Colonic mucosa (tissue), 4 donors: ENCODE measurements at regions of chr19 and their contacts with region 1.

Region 1: GRCh38 chr19:14347999-14348889 is 33.0 kb upstream of the ADGRE5 start:
- DNase-seq: peak; percentile 73
- H3K4me3 ChIP-seq: peak overlapping the region; percentile 3
- H3K27ac ChIP-seq: no peak overlapping the region
- H3K4me1 ChIP-seq: no peaks in the 10 kb centered on the region
- H3K27me3 ChIP-seq: no peaks in the 10 kb centered on the region
- CTCF ChIP-seq: peak; percentile 98

Region 2: GRCh38 chr19:14183741-14184350 is 164.4 kb before region 1 on chr19:
- intact Hi-C with region 1: no loop called
- DNase-seq: no peak
- H3K4me3 ChIP-seq: no peak overlapping the region
- H3K27ac ChIP-seq: no peak overlapping the region
- H3K4me1 ChIP-seq: no peaks in the 10 kb centered on the region
- H3K27me3 ChIP-seq: no peaks in the 10 kb centered on the region
- CTCF ChIP-seq: no peak

Region 3: DNA sequence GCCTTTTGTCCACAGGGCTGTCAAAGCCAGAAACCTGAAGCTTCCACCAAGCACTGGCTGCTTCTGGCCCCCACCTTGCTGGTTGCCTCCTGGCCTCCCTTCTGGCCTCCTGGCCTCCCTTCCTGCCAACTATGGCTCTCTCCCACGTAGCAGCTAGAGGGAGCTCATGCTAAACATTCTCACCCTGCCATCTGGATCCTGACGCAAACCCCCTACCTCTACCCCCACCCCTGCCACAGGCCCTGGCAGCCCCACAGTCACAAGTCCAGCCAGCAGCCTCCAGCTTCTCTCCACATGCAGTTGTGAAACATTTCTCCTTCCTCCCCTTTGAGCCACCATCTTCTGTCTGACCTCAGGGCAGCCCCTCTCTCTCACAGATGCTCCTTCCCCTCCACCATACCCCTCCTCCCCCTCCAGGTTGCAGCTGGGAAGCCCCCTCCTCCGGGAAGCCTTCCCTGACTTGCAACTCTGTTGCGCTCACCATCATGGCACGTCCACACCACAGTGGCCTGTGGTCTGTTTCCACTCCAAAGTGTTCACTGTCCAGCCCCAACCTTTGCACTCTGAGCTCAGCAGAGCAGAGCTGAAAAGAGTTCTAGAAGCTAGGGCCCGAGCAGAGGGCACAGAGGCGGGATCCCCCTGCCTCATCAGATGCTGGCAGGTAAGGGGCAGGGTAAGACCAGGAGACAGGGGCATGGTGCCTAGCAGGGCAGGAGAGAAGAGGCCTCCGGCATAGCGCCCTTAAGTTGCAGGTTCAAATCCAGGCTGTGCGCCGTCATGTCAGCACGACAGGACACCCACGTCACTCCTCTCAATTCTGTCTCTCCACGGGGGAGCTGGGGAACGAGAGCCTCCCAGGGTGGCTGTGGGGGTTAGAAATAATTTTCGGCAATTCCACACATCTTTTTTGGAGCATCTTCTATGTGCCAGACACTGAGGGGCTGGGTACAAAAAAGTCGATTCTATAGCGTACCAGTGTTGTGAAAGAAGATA is 149.6 kb before region 1 on chr19:
- intact Hi-C with region 1: loop called (anchors 5 kb)
- DNase-seq: no peak
- H3K4me3 ChIP-seq: no peak overlapping the region
- H3K27ac ChIP-seq: no peak overlapping the region
- H3K4me1 ChIP-seq: no peaks in the 10 kb centered on the region
- H3K27me3 ChIP-seq: no peaks in the 10 kb centered on the region
- CTCF ChIP-seq: no peak

Region 4: GRCh38 chr19:14265290-14266036 is 82.8 kb before region 1 on chr19:
- intact Hi-C with region 1: no loop called
- DNase-seq: no peak
- H3K4me3 ChIP-seq: no peak overlapping the region
- H3K27ac ChIP-seq: no peak overlapping the region
- H3K4me1 ChIP-seq: no peaks in the 10 kb centered on the region
- H3K27me3 ChIP-seq: peaks cover 11% of the 10 kb centered on the region
- CTCF ChIP-seq: no peak

Region 5: GRCh38 chr19:14310055-14310454 is 38.2 kb before region 1 on chr19:
- intact Hi-C with region 1: no loop called
- DNase-seq: no peak
- H3K4me3 ChIP-seq: no peak overlapping the region
- H3K27ac ChIP-seq: no peak overlapping the region
- H3K4me1 ChIP-seq: no peaks in the 10 kb centered on the region
- H3K27me3 ChIP-seq: no peaks in the 10 kb centered on the region
- CTCF ChIP-seq: no peak

Region 6: DNA sequence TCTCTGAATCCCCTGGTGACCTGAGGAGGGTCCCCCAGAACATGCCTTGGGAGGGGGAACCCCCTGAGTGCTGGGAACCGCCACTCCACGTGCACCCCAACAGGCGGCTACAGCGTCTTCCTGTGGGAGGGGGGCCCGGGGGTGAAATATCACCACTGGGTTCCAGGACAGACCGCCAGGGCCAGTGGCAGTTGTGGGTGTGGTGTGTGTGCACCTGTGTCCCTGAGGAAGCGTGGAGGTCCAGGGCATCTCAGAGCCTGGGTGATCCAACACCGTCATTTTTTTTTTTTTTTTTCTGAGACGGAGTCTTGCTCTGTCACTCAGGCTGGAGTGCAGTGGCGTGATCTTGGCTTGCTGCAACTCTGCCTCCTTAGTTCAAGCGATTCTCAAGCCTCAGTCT is 37.2 kb after region 1 on chr19:
- intact Hi-C with region 1: no loop called
- DNase-seq: no peak
- H3K4me3 ChIP-seq: no peak overlapping the region
- H3K27ac ChIP-seq: peak overlapping the region; percentile 92
- H3K4me1 ChIP-seq: peaks cover 7% of the 10 kb centered on the region
- H3K27me3 ChIP-seq: no peaks in the 10 kb centered on the region
- CTCF ChIP-seq: no peak